ENCODE measurements at regions of chr6 and their contacts with region 1.

Region 1: GRCh38 chr6:90296346-90297114 is at the start of gene BACH2:
- DNase-seq: peak; percentile 91
- total RNA-seq, gene BACH2: 8.4 TPM

Region 2: GRCh38 chr6:89984926-89985750 is 311.4 kb before region 1 on chr6:
- intact Hi-C with region 1: loop called (anchors 5 kb)
- DNase-seq: peak; percentile 92

Region 3: GRCh38 chr6:90179190-90180169 is 117.0 kb before region 1 on chr6:
- intact Hi-C with region 1: loop called (anchors 5 kb)
- DNase-seq: no peak

Region 4: DNA sequence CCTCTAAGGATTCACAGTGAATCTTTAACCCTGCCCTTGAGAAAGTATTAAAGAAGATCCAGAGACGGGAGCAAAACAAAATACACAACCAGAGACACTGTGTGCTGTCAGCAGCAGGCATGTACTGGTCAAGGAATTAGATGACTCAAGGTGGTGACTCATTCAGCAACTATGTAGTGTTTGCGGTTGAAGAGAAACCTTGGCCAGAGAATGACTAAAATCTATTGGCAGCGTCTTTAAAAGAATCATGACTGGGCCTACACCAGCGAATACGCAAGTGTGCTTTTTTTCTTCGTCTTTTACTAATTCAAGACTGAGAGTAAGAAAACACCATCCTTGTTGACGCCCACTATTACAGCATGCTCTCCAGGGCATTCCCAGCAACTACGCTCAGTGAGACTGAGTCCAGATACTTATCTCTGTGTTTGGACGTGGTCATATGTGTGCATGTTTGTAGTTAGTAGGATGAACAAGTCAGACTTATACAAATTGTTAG is 72.5 kb after region 1 on chr6:
- intact Hi-C with region 1: loop called (anchors 5 kb)
- DNase-seq: no peak

Region 5: GRCh38 chr6:90478789-90479602 is 182.5 kb after region 1 on chr6:
- intact Hi-C with region 1: loop called (anchors 5 kb)
- DNase-seq: peak; percentile 89

Measured in cardiac septum (tissue), 1 donor.